Activated T-helper 2 cell treated with anti-CD3 and anti-CD28 coated beads, Interferon-gamma antibody, Interleukin-2, Interleukin-4, amounts not matched to agents 10 μg/mL and 5 μg/mL and 100 μg/mL, durations not matched to agents 14 hours and 24 hours and 36 hours (primary cell): ENCODE measurements at regions of chr3 and their contacts with region 1.

Region 1: DNA sequence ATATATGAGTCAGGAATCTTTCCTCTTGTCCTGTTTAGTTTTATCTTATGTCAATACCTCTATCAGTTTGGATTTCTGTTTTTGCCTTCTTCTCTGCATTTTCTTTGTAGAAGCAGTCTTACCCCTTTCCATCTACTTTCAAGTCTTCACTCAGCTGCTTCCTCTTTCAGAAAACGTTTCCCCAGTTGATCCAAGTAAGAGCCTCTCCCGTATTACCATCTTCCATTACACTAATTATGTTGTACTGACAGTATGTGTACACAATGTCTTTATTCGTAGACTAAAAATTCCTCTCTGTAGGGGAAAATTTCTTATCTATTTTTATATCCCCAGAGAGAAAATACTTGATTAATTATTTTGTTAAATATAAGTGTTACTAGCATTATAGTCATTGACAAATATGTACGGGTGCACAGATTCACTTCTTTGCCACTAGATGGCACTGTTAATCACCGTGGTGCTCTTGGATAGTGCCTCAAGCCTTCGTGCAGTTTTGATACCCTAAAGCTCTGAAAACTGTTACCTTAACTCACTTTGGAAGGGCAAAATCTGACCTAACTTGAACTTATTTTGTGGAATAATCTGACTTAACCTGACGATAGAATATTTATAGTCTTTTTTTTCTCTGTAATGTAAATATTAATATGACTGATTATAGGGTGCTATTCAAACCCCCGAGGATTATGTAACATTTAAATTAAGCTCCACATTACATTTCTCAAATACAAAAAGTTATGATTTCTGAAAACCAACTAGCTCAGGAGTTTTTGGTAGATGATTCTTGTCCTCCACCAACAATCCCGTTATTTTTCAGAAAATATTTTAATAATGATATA is 74.2 kb upstream of the POU1F1 start:
- DNase-seq: no peak
- H3K4me3 Mint-ChIP-seq: no peak overlapping the region
- H3K27ac Mint-ChIP-seq: no peak overlapping the region
- H3K4me1 Mint-ChIP-seq: peaks cover 2% of the 10 kb centered on the region
- H3K27me3 Mint-ChIP-seq: peaks cover 11% of the 10 kb centered on the region

Region 2: DNA sequence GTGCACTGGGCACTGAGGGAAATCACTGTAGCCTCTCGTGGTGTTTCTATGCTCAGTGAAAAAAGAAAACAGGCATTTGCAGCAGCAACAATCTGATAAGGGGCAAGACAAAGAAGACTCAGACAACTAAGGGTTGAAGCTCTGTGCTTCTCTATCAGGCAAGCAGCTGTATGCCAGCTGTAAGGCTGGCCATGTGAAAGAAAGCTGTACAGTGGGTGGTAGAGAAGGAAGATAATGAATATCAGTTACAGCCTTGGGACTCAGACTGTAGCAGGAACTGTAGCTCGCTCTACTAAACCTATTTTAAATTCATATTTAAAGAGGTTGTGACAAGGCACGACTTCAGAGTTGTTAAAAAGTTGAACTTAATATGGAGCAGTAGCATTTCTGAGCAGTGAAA is 435.9 kb before region 1 on chr3:
- intact Hi-C with region 1: no loop called
- DNase-seq: no peak
- H3K4me3 Mint-ChIP-seq: no peak overlapping the region
- H3K27ac Mint-ChIP-seq: no peak overlapping the region
- H3K4me1 Mint-ChIP-seq: no peaks in the 10 kb centered on the region
- H3K27me3 Mint-ChIP-seq: no peaks in the 10 kb centered on the region

Region 3: DNA sequence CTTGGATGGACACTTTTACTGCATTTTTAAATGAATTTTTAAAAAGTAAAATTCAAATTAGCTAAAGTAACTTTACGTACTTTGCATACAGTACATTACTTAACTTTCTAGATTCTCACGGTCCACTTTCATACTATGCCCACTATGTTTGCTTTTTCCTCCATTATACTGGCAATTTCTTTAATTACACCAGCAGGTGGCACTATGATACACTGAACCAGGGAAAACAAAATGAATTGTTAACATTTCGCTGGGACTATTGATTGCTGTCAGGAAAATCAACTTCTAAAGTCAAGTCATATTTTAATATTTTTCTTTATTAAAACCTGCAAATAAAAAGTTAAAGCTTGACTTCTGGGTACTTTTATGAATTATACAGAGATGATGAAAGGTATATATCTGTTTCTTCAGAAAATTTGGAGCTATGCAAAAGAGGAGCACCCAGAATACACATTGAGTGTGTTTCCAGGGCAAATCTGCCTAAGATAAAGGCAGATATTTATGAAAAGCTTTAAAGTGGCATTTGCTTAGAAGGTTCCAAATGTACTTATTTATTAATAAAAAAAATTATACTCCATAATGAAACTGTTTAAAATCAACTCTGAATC is 52.4 kb before region 1 on chr3:
- intact Hi-C with region 1: loop called (anchors 2 kb)
- DNase-seq: no peak
- H3K4me3 Mint-ChIP-seq: no peak overlapping the region
- H3K27ac Mint-ChIP-seq: no peak overlapping the region
- H3K4me1 Mint-ChIP-seq: peaks cover 6% of the 10 kb centered on the region
- H3K27me3 Mint-ChIP-seq: no peaks in the 10 kb centered on the region